HAP-1 (cell line): ENCODE measurements at regions of chr2 and their contacts with region 1.

Region 1: GRCh38 chr2:200811336-200812121 is at the start of gene BZW1:
- DNase-seq: peak; percentile 97 to 98
- H3K4me3 ChIP-seq: peak within 1 kb of the TSS; percentile 92
- H3K4me1 ChIP-seq: peaks cover 15% of the 10 kb centered on the region
- H3K27me3 ChIP-seq: no peaks in the 10 kb centered on the region

Region 2: GRCh38 chr2:199955339-199956261 is 855.9 kb before region 1 on chr2 and contains the starts of genes MAIP1 and TYW5:
- in situ Hi-C with region 1: loop called (anchors 10 kb)
- DNase-seq: peak; percentile 79 to 88
- H3K4me3 ChIP-seq: peak within 1 kb of the TSS; percentile 89
- H3K4me1 ChIP-seq: peaks cover 10% of the 10 kb centered on the region
- H3K27me3 ChIP-seq: no peaks in the 10 kb centered on the region

Region 3: GRCh38 chr2:200713003-200713703 is 98.4 kb before region 1 on chr2:
- in situ Hi-C with region 1: loop called (anchors 10 kb)
- DNase-seq: peak; percentile 85 to 91
- H3K4me3 ChIP-seq: no peak overlapping the region
- H3K4me1 ChIP-seq: no peaks in the 10 kb centered on the region
- H3K27me3 ChIP-seq: peaks cover 2% of the 10 kb centered on the region; the same call in 1 of the 2 replicates

Region 4: DNA sequence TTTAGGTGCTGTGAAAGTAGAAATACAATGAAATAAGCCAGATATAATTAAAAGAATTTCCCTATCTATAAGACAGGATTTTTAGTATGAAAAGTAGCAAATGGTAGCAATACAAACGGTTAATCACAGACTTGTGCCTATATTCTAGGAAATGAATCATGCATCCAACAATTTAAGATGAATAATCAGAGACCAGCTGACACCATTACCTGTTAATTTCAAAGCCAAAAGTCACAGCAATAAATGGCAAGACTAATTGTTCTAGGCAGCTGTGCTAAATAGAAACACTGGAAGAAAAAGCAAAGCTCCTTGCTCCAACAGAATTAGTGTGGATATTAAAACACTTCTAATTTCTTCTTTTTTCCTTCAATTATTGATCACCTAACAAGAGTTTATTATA is 922.0 kb after region 1 on chr2:
- in situ Hi-C with region 1: no loop called
- DNase-seq: no peak
- H3K4me3 ChIP-seq: no peak overlapping the region
- H3K4me1 ChIP-seq: no peaks in the 10 kb centered on the region
- H3K27me3 ChIP-seq: no peaks in the 10 kb centered on the region